B cell (primary cell): ENCODE measurements at regions of chr1 and their contacts with region 1.

Region 1: DNA sequence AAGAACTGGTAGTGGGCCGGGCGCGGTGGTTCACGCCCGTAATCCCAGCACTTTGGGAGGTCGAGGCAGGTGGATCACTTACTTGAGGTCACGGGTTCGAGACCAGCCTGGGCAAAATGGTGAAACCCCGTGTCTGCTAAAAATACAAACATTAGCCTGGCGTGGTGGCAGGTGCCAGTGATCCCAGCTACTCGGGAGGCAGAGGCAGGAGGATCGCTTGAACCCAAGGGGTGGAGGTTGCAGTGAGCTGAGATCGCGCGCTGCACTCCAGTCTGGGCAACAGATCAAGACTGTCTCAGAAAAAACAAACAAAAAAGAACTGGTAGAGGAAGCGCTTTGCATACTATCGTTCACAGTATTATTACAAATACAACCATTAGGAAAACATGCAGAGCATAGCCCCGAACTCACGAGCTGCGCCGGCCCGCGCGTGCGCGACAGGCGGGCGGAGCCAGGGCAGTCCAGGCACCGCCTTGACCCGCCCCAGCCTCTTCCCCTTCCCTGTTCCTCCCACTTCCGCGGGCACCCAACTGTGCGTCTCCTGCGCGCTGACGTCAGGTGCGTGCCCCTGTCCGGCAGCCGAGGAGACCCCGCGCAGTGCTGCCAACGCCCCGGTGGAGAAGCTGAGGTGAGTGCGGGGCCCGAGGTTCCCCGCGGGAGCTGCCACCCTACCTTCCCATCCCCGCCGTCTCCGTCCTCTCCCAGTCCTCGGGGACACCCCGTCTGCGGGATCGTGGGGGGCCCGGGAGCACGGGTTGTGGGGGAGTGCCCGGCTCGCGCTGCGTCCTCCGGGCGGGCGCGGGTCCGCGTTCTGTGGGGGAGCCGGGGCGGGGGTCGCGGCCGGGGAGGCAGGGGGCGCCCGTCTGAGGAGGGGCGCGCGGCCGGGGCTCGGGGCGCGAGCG is at the start of gene CDC42:
- DNase-seq: peak; percentile 97
- ATAC-seq: peak; percentile 90
- H3K4me3 ChIP-seq: peak within 1 kb of the TSS; percentile 66 to 89 (median 79)
- H3K4me3 Mint-ChIP-seq: peak within 1 kb of the TSS; percentile 98
- H3K27ac ChIP-seq: peak within 1 kb of the TSS; percentile 96 to 98
- H3K27ac Mint-ChIP-seq: peak within 1 kb of the TSS; percentile 98
- H3K4me1 ChIP-seq: peaks cover 37 to 47% of the 10 kb centered on the region in 2 donors
- H3K4me1 Mint-ChIP-seq: peaks cover 45% of the 10 kb centered on the region
- H3K27me3 ChIP-seq: no peaks in the 10 kb centered on the region
- H3K27me3 Mint-ChIP-seq: no peaks in the 10 kb centered on the region
- CTCF ChIP-seq: no peak
- total RNA-seq, gene CDC42: 202 and 209 TPM in 2 replicates

Region 2: GRCh38 chr1:22018583-22019559 is 33.5 kb before region 1 on chr1:
- CTCF ChIA-PET with region 1: interaction called, 89 read pairs
- POLR2A ChIA-PET with region 1: interaction called, 87 read pairs
- intact Hi-C with region 1: no loop called
- DNase-seq: peak; percentile 41
- ATAC-seq: peak; percentile 94
- H3K4me3 ChIP-seq: no peak overlapping the region
- H3K4me3 Mint-ChIP-seq: peak overlapping the region; percentile 61
- H3K27ac ChIP-seq: peak overlapping the region; percentile 33 to 83
- H3K27ac Mint-ChIP-seq: peak overlapping the region; percentile 87
- H3K4me1 ChIP-seq: peaks cover 12 to 20% of the 10 kb centered on the region in 2 donors
- H3K4me1 Mint-ChIP-seq: peaks cover 22% of the 10 kb centered on the region
- H3K27me3 ChIP-seq: no peaks in the 10 kb centered on the region
- H3K27me3 Mint-ChIP-seq: no peaks in the 10 kb centered on the region
- CTCF ChIP-seq: peak; percentile 42

Region 3: GRCh38 chr1:22039594-22040285 is 12.6 kb before region 1 on chr1:
- CTCF ChIA-PET with region 1: interaction called, 37 read pairs
- POLR2A ChIA-PET with region 1: interaction called, 65 read pairs
- intact Hi-C with region 1: loop called (anchors 1 kb)
- DNase-seq: peak; percentile 96
- ATAC-seq: peak; percentile 99
- H3K4me3 ChIP-seq: peak overlapping the region; percentile 30 to 71 (median 52)
- H3K4me3 Mint-ChIP-seq: peak overlapping the region; percentile 87
- H3K27ac ChIP-seq: peak overlapping the region; percentile 98
- H3K27ac Mint-ChIP-seq: peak overlapping the region; percentile 98
- H3K4me1 ChIP-seq: peaks cover 42 to 60% of the 10 kb centered on the region in 2 donors
- H3K4me1 Mint-ChIP-seq: peaks cover 41% of the 10 kb centered on the region
- H3K27me3 ChIP-seq: no peaks in the 10 kb centered on the region
- H3K27me3 Mint-ChIP-seq: no peaks in the 10 kb centered on the region
- CTCF ChIP-seq: peak; percentile 8

Region 4: DNA sequence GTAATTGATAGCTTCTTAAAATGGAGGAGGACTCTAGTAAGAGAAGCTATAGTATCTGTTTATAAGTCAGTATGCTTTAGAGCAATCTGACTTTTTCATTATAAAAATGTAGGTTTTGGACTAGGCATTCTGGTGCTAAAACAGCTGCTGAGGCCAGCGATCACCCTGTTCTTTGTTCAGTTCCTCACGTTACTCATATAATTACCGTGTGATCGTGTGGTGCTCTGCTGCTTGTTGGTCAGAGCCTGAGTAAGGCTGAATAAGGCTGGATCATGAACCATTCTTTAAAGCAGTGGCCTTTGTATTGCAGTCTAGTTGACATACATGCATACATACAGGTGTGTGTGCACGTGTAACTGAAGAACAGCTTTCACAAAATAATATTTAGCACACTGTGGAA is 25.4 kb after region 1 on chr1:
- CTCF ChIA-PET with region 1: interaction called, 3 read pairs
- POLR2A ChIA-PET with region 1: interaction called, 10 read pairs
- intact Hi-C with region 1: loop called (anchors 2 kb)
- DNase-seq: no peak
- ATAC-seq: no peak
- H3K4me3 ChIP-seq: no peak overlapping the region
- H3K4me3 Mint-ChIP-seq: peak overlapping the region; percentile 35
- H3K27ac ChIP-seq: peak overlapping the region in 1 of 2 donors; percentile 17
- H3K27ac Mint-ChIP-seq: no peak overlapping the region
- H3K4me1 ChIP-seq: peaks cover 55 to 63% of the 10 kb centered on the region in 2 donors
- H3K4me1 Mint-ChIP-seq: peaks cover 78% of the 10 kb centered on the region
- H3K27me3 ChIP-seq: no peaks in the 10 kb centered on the region
- H3K27me3 Mint-ChIP-seq: no peaks in the 10 kb centered on the region
- CTCF ChIP-seq: no peak

Region 5: DNA sequence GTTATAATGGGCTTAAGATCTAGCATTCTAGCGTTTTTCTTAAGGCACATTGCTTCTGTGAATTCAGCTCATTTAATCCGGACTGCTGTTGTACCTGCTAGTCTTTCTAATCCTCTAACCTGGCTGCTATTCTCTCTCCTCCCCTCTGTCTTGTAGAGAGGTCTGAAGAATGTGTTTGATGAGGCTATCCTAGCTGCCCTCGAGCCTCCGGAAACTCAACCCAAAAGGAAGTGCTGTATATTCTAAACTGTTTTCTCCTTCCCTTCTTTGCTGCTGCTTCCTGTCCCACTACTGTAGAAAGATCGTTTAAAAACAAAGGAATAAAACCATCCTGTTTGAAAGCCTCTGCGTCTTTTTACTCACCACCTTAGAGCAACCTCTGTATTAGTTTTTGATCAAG is 37.4 kb after region 1 on chr1:
- CTCF ChIA-PET with region 1: interaction called, 6 read pairs
- POLR2A ChIA-PET with region 1: interaction called, 6 read pairs
- intact Hi-C with region 1: loop called (anchors 2 kb)
- DNase-seq: no peak
- ATAC-seq: no peak
- H3K4me3 ChIP-seq: peak overlapping the region in 2 of 5 experiments; percentile 13
- H3K4me3 Mint-ChIP-seq: peak overlapping the region; percentile 70
- H3K27ac ChIP-seq: peak overlapping the region; percentile 11 to 69
- H3K27ac Mint-ChIP-seq: peak overlapping the region; percentile 11
- H3K4me1 ChIP-seq: peaks cover 43 to 48% of the 10 kb centered on the region in 2 donors
- H3K4me1 Mint-ChIP-seq: peaks cover 74% of the 10 kb centered on the region
- H3K27me3 ChIP-seq: no peaks in the 10 kb centered on the region
- H3K27me3 Mint-ChIP-seq: no peaks in the 10 kb centered on the region
- CTCF ChIP-seq: no peak

Region 6: DNA sequence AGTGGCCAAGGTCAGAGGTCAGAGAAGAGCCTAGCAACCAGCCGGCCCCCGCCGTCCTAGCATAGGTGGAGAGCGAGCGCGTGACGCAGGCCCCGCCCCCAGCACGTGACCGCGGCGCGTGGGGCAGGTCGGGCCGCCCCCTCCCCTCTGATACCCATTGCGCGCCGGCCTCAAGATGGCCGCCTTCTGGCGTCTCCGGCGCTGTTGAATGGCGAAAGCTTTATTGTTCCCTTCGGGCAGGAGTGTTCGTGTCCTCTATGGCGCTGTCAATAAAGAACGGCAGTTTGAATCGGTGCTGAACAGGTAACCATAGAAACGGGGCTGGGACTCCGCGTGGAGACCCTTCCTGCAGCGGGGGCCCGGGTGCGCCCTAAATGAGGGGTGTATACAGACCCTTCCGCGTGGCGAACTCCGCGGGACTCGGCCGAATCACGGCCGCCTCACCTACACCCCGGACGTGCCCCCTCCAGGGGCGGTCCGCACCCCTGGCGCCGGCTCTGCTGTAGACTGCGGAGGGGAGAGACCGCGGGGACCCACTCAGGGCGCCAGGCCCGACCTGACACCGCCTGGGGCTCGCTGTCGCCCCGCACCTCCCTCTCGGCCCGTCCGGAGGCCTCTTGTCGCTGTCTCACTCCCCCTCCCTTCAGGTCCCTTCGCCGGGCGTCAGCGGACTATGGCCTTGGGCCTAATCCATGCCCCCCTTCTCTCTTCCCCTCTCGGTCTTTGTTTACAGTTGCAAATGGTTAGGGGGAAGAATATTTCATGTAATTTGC is 399.5 kb after region 1 on chr1 and contains the start of gene ZBTB40:
- CTCF ChIA-PET with region 1: no interaction called
- POLR2A ChIA-PET with region 1: no interaction called
- intact Hi-C with region 1: loop called (anchors 5 kb)
- DNase-seq: peak; percentile 96
- ATAC-seq: peak; percentile 88
- H3K4me3 ChIP-seq: peak within 1 kb of the TSS; percentile 63 to 92 (median 72)
- H3K4me3 Mint-ChIP-seq: peak within 1 kb of the TSS; percentile 95
- H3K27ac ChIP-seq: peak within 1 kb of the TSS; percentile 73 to 93
- H3K27ac Mint-ChIP-seq: peak within 1 kb of the TSS; percentile 96
- H3K4me1 ChIP-seq: peaks cover 14 to 17% of the 10 kb centered on the region in 2 donors
- H3K4me1 Mint-ChIP-seq: peaks cover 37% of the 10 kb centered on the region
- H3K27me3 ChIP-seq: no peaks in the 10 kb centered on the region
- H3K27me3 Mint-ChIP-seq: no peaks in the 10 kb centered on the region
- CTCF ChIP-seq: no peak
- total RNA-seq, gene ZBTB40: 51.9 and 56.3 TPM in 2 replicates